PC-3 (cell line): ENCODE measurements at regions of chr12 and their contacts with region 1.

Region 1: GRCh38 chr12:1093166-1093751 is 102.2 kb downstream of the ERC1 start:
- DNase-seq: peak; percentile 77
- ATAC-seq: peak; percentile 70
- H3K4me3 ChIP-seq: no peak overlapping the region
- H3K27ac ChIP-seq: no peak overlapping the region
- H3K4me1 ChIP-seq: 0 out of 2 replicates have a peak, but pooled peaks cover 4% of the 10 kb centered on the region
- H3K27me3 ChIP-seq: no peaks in the 10 kb centered on the region
- CTCF ChIP-seq: peak; percentile 82

Region 2: DNA sequence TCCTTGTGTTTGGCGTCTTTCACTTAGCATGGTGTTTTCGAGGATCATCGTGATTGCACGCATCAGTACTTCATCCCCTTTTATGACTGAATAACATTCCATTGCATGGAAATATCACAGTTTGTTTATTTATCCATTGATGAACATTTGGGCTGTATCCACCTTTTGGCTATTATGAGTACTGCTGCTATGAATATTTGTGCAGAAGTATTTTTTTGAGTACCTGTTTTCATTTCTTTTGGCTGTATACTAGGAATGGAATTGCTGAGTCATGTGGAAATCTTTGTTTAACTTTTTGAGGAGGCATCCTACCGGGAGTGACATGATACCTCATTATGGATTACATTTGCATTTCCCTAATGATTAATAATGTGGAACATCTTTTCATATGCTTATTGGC is 274.5 kb before region 1 on chr12:
- CTCF ChIA-PET with region 1: no interaction called
- POLR2A ChIA-PET with region 1: no interaction called
- intact Hi-C with region 1: loop called (anchors 5 kb)
- DNase-seq: peak; percentile 44
- ATAC-seq: no peak
- H3K4me3 ChIP-seq: no peak overlapping the region
- H3K27ac ChIP-seq: no peak overlapping the region
- H3K4me1 ChIP-seq: peaks cover 10% of the 10 kb centered on the region; the same call in 1 of the 2 replicates
- H3K27me3 ChIP-seq: no peaks in the 10 kb centered on the region
- CTCF ChIP-seq: peak; percentile 30; the same call in 1 of the 2 replicates

Region 3: DNA sequence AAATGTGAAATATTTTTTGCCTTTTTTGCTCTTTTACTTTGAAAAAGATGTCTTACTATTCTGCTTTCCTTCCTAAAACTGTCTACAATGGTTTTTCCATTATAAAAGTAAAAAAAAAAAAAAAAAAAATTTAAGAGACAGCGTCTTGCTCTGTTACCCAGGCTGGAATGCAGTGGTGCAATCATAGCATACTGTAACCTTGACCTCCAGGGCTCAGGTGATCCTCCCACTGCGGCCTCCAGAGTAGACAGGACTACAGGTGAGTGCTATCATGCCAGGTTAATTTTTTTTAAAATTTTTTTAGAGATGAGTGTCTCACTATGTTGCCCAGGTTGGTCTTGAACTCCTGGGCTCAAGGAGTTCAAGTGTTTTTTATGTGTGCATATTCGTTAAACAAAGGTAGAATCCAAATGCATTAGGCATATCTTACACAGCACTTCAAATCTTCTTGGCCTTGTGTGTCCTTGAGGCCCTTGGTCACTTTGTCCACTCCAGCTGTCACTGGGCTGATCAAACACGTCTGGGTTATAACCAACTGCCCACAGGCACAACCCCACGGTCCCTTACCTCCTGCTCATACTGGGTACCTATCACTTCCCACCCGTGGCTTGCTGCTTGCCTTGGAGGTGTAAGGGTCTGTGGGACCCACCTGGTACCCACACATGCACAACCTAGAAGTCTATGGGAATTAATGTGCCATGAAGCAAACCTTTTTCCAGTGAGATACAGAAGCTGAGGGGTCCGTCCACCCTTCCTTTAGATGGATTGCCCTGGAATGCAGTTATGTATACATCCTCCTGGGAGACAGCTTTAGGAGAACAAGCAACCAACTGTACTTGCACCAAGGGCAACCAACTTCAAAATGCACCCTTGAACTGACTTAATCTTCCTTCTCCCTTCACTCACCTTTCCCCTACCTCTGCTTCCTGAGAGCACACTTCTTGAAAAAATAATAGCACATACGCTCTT is 156.6 kb before region 1 on chr12:
- CTCF ChIA-PET with region 1: no interaction called
- POLR2A ChIA-PET with region 1: interaction called, 41 read pairs
- intact Hi-C with region 1: no loop called
- DNase-seq: no peak
- ATAC-seq: no peak
- H3K4me3 ChIP-seq: no peak overlapping the region
- H3K27ac ChIP-seq: no peak overlapping the region
- H3K4me1 ChIP-seq: no peaks in the 10 kb centered on the region
- H3K27me3 ChIP-seq: no peaks in the 10 kb centered on the region
- CTCF ChIP-seq: no peak

Region 4: GRCh38 chr12:949453-950191 is 143.6 kb before region 1 on chr12 and contains the start of gene RAD52:
- CTCF ChIA-PET with region 1: interaction called, 9 read pairs
- POLR2A ChIA-PET with region 1: interaction called, 4 read pairs
- intact Hi-C with region 1: loop called (anchors 5 kb)
- DNase-seq: peak; percentile 97
- ATAC-seq: peak; percentile 87
- H3K4me3 ChIP-seq: peak within 1 kb of the TSS; percentile 84
- H3K27ac ChIP-seq: peak within 1 kb of the TSS; percentile 94
- H3K4me1 ChIP-seq: peaks cover 18% of the 10 kb centered on the region
- H3K27me3 ChIP-seq: no peaks in the 10 kb centered on the region
- CTCF ChIP-seq: peak; percentile 84
- total RNA-seq, gene RAD52: 17.4 and 19.3 TPM in 2 replicates

Region 5: GRCh38 chr12:990661-991349 is 102.5 kb before region 1 on chr12 and contains the start of gene ERC1:
- CTCF ChIA-PET with region 1: no interaction called
- POLR2A ChIA-PET with region 1: no interaction called
- intact Hi-C with region 1: loop called (anchors 5 kb)
- DNase-seq: peak; percentile 73
- ATAC-seq: peak; percentile 85
- H3K4me3 ChIP-seq: peak within 1 kb of the TSS; percentile 69
- H3K27ac ChIP-seq: peak within 1 kb of the TSS; percentile 79
- H3K4me1 ChIP-seq: peaks cover 41% of the 10 kb centered on the region
- H3K27me3 ChIP-seq: no peaks in the 10 kb centered on the region
- CTCF ChIP-seq: no peak
- total RNA-seq, gene ERC1: 12.3 and 16.0 TPM in 2 replicates

Region 6: GRCh38 chr12:1047898-1048660 is 45.2 kb before region 1 on chr12:
- CTCF ChIA-PET with region 1: interaction called, 3 read pairs
- POLR2A ChIA-PET with region 1: no interaction called
- intact Hi-C with region 1: loop called (anchors 10 kb)
- DNase-seq: no peak
- ATAC-seq: no peak
- H3K4me3 ChIP-seq: no peak overlapping the region
- H3K27ac ChIP-seq: no peak overlapping the region
- H3K4me1 ChIP-seq: peaks cover 67% of the 10 kb centered on the region
- H3K27me3 ChIP-seq: no peaks in the 10 kb centered on the region
- CTCF ChIP-seq: no peak